Activated CD4-positive, alpha-beta memory T cell treated with anti-CD3 and anti-CD28 coated beads for 36 hours (primary cell): ENCODE measurements at regions of chr2 and their contacts with region 1.

Region 1: GRCh38 chr2:200811336-200812121 is at the start of gene BZW1:
- DNase-seq: peak; percentile 98
- H3K4me3 Mint-ChIP-seq: peak within 1 kb of the TSS; percentile 100
- H3K27ac Mint-ChIP-seq: peak within 1 kb of the TSS; percentile 100
- H3K4me1 Mint-ChIP-seq: peaks cover 44% of the 10 kb centered on the region
- H3K27me3 Mint-ChIP-seq: peaks cover 1% of the 10 kb centered on the region
- total RNA-seq, gene BZW1: 416 to 423 TPM

Region 2: DNA sequence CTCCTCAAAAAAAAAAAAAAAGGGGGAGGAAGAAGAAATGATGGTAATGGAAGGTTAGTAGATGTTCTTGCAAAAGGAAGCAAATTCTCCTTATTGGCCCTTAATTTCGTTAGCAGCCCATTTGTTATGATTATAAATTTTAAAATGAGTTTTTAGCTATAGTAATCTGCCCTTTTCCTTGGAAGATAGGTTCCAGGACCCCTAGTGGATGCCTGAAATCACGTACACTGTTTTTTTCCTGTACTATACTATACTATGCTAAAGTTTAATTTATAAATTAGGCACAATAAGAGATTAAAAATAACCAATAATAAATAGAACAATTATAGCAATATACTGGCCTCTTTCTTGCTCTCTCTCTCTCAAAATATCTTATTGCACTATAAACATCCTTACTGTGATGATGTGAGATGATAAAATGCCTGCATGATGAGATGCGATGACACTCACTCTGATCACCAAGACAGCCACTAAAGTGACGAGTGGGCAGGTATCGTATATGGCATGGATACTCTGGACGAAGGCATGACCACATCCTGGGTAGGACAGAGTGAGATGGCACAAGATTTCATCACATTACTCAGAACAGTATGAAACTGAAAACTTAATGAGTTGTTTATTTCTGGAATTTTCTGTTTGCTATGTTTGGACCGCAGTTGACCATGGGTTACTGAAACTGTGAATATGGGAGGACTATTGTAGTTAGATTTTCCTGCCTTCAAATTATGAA is 388.8 kb before region 1 on chr2:
- CTCF ChIA-PET with region 1: no interaction called
- POLR2A ChIA-PET with region 1: no interaction called
- intact Hi-C with region 1: no loop called
- DNase-seq: peak; percentile 15
- H3K4me3 Mint-ChIP-seq: no peak overlapping the region
- H3K27ac Mint-ChIP-seq: no peak overlapping the region
- H3K4me1 Mint-ChIP-seq: peaks cover 17% of the 10 kb centered on the region
- H3K27me3 Mint-ChIP-seq: no peaks in the 10 kb centered on the region

Region 3: GRCh38 chr2:200525882-200526651 is 285.5 kb before region 1 on chr2 and contains the start of gene SGO2:
- CTCF ChIA-PET with region 1: no interaction called
- POLR2A ChIA-PET with region 1: no interaction called
- intact Hi-C with region 1: loop called (anchors 1 kb)
- DNase-seq: peak; percentile 98
- H3K4me3 Mint-ChIP-seq: peak within 1 kb of the TSS; percentile 88
- H3K27ac Mint-ChIP-seq: peak within 1 kb of the TSS; percentile 73
- H3K4me1 Mint-ChIP-seq: peaks cover 20% of the 10 kb centered on the region
- H3K27me3 Mint-ChIP-seq: no peaks in the 10 kb centered on the region
- total RNA-seq, gene SGO2: 40.5 to 40.7 TPM

Region 4: DNA sequence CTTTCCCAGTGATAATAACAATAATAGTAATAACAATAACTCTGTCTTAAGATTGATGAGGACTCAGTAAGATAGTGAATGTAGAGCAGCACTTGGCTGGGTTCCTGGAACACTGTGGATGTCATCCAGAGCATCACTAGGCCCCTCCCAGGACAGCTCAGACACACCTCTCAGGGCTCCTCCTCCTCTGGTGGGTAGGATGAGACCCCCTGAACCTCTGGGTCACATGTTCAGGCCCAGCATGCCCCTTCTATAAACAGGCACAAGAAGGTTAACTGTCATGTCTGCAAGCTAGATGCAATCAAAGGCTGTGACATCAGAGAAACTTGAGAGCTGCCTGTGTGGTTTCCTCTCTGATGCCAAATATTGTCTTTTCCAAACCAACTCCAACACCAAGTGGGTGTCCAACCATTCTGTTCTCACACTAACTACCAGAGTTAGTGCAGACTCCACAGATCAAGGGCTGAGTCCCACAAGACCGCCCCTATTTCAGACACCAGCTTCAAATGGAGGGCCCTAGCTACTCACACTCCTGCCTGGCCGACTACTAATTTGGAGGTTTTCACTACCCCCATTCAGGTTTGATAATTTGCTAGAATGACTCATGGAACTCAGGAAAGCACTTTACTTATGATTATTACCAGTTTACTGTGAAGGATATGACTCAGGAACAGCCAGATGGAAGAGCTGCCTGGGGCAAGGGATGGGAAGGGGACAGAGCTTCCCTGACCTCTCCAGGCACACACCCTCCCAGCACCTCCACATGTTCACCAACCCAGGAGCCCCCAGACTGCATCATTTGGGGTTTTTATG is 46.2 kb before region 1 on chr2:
- CTCF ChIA-PET with region 1: interaction called, 3 read pairs
- POLR2A ChIA-PET with region 1: interaction called, 17 read pairs
- intact Hi-C with region 1: loop called (anchors 1 kb)
- DNase-seq: peak; percentile 75
- H3K4me3 Mint-ChIP-seq: peak overlapping the region; percentile 42
- H3K27ac Mint-ChIP-seq: peak overlapping the region; percentile 96
- H3K4me1 Mint-ChIP-seq: peaks cover 32% of the 10 kb centered on the region
- H3K27me3 Mint-ChIP-seq: no peaks in the 10 kb centered on the region

Region 5: GRCh38 chr2:200864176-200864976 is 52.8 kb after region 1 on chr2 and contains the start of gene CLK1:
- CTCF ChIA-PET with region 1: interaction called, 4 read pairs
- POLR2A ChIA-PET with region 1: interaction called, 29 read pairs
- intact Hi-C with region 1: loop called (anchors 1 kb)
- DNase-seq: peak; percentile 98
- H3K4me3 Mint-ChIP-seq: peak within 1 kb of the TSS; percentile 87
- H3K27ac Mint-ChIP-seq: peak within 1 kb of the TSS; percentile 100
- H3K4me1 Mint-ChIP-seq: peaks cover 36% of the 10 kb centered on the region
- H3K27me3 Mint-ChIP-seq: no peaks in the 10 kb centered on the region
- total RNA-seq, gene CLK1: 112 to 114 TPM

Region 6: DNA sequence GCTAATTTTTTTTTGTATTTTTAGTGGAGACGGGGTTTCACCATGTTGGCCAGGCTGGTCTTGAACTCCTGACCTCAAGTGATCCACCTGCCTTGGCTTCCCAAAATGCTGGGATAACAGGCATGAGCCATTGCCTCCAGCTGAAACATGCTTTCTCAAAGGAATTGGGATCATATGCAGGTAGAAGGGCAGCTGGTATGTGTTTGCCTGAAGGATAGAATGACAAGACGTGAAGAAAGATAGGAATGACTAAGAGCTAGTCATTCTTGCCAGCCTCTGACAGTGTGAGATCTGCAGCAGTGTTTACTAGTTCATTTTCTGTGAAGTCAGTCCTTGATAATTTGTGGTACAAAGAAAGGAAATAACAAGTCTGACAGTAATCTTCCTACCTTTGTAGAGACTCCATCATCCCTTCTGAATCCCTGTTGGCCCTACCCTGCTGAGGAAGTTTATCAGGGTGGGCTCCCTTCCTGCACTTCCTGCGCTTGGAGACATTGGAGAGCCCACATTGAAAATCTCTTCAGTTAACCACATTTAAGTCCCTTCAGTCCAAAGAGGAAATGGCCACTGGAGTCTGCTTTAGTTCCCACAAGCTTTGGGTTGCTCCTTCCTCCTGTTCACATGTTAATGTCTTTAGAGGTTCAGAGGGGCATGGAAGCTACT is 319.1 kb after region 1 on chr2:
- CTCF ChIA-PET with region 1: no interaction called
- POLR2A ChIA-PET with region 1: interaction called, 6 read pairs
- intact Hi-C with region 1: loop called (anchors 1 kb)
- DNase-seq: peak; percentile 55
- H3K4me3 Mint-ChIP-seq: peak overlapping the region; percentile 92
- H3K27ac Mint-ChIP-seq: peak overlapping the region; percentile 94
- H3K4me1 Mint-ChIP-seq: peaks cover 54% of the 10 kb centered on the region
- H3K27me3 Mint-ChIP-seq: no peaks in the 10 kb centered on the region